CD8-positive, alpha-beta memory T cell (primary cell): ENCODE measurements at regions of chr2 and their contacts with region 1.

Region 1: GRCh38 chr2:31919499-31919898 is 91.3 kb downstream of the MEMO1 start:
- DNase-seq: no peak
- H3K4me3 ChIP-seq: no peak overlapping the region
- H3K4me3 Mint-ChIP-seq: no peak overlapping the region
- H3K27ac ChIP-seq: no peak overlapping the region
- H3K27ac Mint-ChIP-seq: peak overlapping the region in 2 of 8 donors; percentile 14
- H3K4me1 ChIP-seq: no peaks in the 10 kb centered on the region
- H3K4me1 Mint-ChIP-seq: peaks cover 0 to 24% (median 7%) of the 10 kb centered on the region in 3 donors
- H3K27me3 ChIP-seq: no peaks in the 10 kb centered on the region
- H3K27me3 Mint-ChIP-seq: no peaks in the 10 kb centered on the region

Region 2: GRCh38 chr2:31933066-31933465 is 13.6 kb after region 1 on chr2:
- CTCF ChIA-PET with region 1: no interaction called
- POLR2A ChIA-PET with region 1: no interaction called
- DNase-seq: no peak
- H3K4me3 ChIP-seq: no peak overlapping the region
- H3K4me3 Mint-ChIP-seq: no peak overlapping the region
- H3K27ac ChIP-seq: no peak overlapping the region
- H3K27ac Mint-ChIP-seq: no peak overlapping the region
- H3K4me1 ChIP-seq: peaks cover 10% of the 10 kb centered on the region
- H3K4me1 Mint-ChIP-seq: peaks cover 18 to 22% (median 18%) of the 10 kb centered on the region in 3 donors
- H3K27me3 ChIP-seq: no peaks in the 10 kb centered on the region
- H3K27me3 Mint-ChIP-seq: no peaks in the 10 kb centered on the region

Region 3: DNA sequence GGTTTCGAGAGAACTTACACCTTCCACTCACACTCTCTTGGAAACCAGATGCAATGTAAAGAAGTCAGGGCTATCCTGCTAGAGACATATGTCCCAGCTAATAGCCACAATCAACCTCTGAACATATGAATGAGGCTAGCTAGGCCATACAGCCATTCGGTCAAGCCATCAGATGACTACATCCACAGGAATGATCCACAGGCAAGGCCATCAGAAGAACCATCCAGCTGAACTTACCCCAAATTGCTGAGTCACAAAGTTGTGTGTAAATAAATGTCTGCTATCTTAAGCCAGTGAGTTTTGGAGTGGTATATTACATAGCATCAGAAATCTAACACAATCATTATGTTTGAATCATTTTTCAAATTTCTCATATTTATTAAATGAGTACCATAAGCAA is 138.6 kb after region 1 on chr2:
- CTCF ChIA-PET with region 1: no interaction called
- POLR2A ChIA-PET with region 1: interaction called, 12 read pairs
- DNase-seq: no peak
- H3K4me3 ChIP-seq: no peak overlapping the region
- H3K4me3 Mint-ChIP-seq: peak overlapping the region in 1 of 7 donors; percentile 61
- H3K27ac ChIP-seq: no peak overlapping the region
- H3K27ac Mint-ChIP-seq: no peak overlapping the region
- H3K4me1 ChIP-seq: peaks cover 5% of the 10 kb centered on the region
- H3K4me1 Mint-ChIP-seq: peaks cover 10 to 12% (median 10%) of the 10 kb centered on the region in 3 donors
- H3K27me3 ChIP-seq: no peaks in the 10 kb centered on the region
- H3K27me3 Mint-ChIP-seq: no peaks in the 10 kb centered on the region